ENCODE measurements at regions of chr2 and their contacts with region 1.

Region 1: DNA sequence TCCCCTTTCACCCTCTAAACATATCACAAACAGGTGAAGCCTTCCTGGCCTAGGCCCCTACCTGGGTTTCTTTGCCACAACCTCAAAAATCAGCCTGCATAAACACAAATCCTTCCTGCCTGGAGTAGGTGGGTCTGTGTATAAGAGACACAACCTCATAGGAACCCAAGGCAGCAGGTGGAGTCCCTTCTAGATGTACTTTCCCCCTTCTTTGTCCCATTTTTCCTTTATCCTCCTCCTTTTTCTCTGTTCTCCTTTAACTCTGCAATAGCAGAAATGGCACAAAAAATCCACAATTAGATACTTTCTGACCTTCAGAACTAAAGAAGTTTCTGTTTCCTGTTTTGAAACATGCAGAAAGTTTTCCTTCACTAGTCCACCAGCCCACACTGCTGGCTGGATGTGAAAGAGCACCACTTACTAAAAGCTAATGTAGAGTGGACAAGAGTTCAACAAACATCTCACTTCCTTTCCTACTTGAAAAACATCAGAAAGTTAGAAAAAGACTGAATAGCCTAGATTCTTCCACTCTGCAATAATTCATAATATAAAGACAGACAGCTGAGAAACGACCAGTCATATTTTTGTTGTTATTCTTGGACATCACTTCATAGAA is 11.2 kb downstream of the SLC40A1 start:
- DNase-seq: no peak
- ATAC-seq: peak in 7 of 8 donors; percentile 53 to 70 (median 62)
- H3K4me3 ChIP-seq: no peak overlapping the region
- H3K27ac ChIP-seq: peak overlapping the region in 9 of 10 donors; percentile 21 to 73 (median 46)
- H3K4me1 ChIP-seq: peaks cover 6 to 80% (median 52%) of the 10 kb centered on the region in 9 donors
- H3K27me3 ChIP-seq: no peaks in the 10 kb centered on the region
- CTCF ChIP-seq: peak in 4 of 9 donors; percentile 34 to 49 (median 42)

Region 2: DNA sequence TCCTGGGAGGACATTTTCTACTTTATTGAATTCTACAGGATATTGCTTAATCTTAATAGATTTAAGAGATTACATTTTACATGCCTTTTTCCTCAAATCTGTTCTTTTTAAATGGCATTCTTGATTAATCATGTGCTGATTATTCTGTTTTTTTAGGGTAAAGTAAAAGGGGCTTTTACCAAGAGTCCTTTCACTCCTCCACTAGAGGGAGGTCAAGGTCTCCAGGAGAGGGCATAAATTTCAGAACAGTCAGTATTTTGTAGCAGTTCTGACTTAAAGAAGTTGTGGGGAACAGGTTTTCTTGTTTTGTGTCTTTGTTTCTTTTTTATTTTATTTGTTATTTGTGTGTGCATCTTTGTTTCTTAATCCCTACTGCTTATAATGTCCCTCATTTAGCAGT is 102.7 kb before region 1 on chr2:
- intact Hi-C with region 1: loop called in 2 of 10 experiments (anchors 5 to 10 kb)
- DNase-seq: peak in 1 of 2 donors; percentile 26
- ATAC-seq: peak in 6 of 8 donors; percentile 47 to 73 (median 67)
- H3K4me3 ChIP-seq: no peak overlapping the region
- H3K27ac ChIP-seq: no peak overlapping the region
- H3K4me1 ChIP-seq: peaks cover 0 to 19% (median 5%) of the 10 kb centered on the region in 9 donors
- H3K27me3 ChIP-seq: no peaks in the 10 kb centered on the region
- CTCF ChIP-seq: peak; percentile 33 to 81 (median 72)

Region 3: GRCh38 chr2:189477756-189478155 is 91.6 kb before region 1 on chr2:
- intact Hi-C with region 1: loop called in 2 of 10 experiments (anchors 2 to 10 kb)
- DNase-seq: no peak
- ATAC-seq: no peak
- H3K4me3 ChIP-seq: no peak overlapping the region
- H3K27ac ChIP-seq: no peak overlapping the region
- H3K4me1 ChIP-seq: no peaks in the 10 kb centered on the region
- H3K27me3 ChIP-seq: no peaks in the 10 kb centered on the region
- CTCF ChIP-seq: no peak

Region 4: DNA sequence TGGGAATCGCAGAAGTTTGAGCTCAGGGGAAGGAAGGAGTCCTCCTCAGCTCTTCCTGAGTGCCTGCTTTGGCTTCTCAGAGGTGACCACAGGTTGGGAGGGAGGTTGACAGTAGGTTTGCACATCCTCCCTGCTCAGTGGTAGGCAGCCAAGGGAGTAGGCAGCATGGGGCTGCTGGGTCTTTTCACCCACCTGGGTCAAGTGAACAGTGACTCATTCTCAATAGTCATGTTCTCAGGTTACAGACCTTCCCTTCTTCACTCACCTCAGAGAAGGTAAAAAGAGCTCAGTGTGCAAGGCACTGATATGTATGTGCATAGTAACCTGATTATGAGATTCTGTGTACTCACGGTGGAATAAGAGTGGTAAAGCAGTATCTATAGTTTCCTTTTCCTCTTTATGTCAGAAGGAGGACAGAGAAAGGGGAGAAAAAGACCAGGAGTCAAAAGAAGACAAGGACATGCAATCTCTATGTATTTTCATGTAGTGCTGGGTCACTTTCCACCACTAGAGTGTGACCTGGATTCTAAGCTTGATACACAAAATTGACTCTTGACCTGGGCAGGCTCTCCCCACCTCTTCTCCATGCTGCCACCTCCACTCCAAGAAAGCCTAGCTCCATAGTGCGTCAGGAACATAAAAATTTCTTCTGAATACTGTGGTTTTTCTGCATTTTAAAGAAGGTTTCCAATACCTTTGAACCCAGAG is 55.4 kb after region 1 on chr2:
- intact Hi-C with region 1: no loop called
- DNase-seq: no peak
- ATAC-seq: no peak
- H3K4me3 ChIP-seq: no peak overlapping the region
- H3K27ac ChIP-seq: no peak overlapping the region
- H3K4me1 ChIP-seq: peaks cover 0 to 8% (median 0%) of the 10 kb centered on the region in 9 donors
- H3K27me3 ChIP-seq: no peaks in the 10 kb centered on the region
- CTCF ChIP-seq: no peak